MCF 10A (cell line): ENCODE measurements at regions of chr5 and their contacts with region 1.

Region 1: GRCh38 chr5:135551593-135552447 is 16.1 kb upstream of the NEUROG1 start:
- DNase-seq: peak; percentile 87
- H3K4me3 Mint-ChIP-seq: no peak overlapping the region
- H3K27ac Mint-ChIP-seq: no peak overlapping the region
- H3K4me1 Mint-ChIP-seq: peaks cover 5% of the 10 kb centered on the region
- H3K27me3 Mint-ChIP-seq: peaks cover 25% of the 10 kb centered on the region
- CTCF ChIP-seq: peak; percentile 97

Region 2: DNA sequence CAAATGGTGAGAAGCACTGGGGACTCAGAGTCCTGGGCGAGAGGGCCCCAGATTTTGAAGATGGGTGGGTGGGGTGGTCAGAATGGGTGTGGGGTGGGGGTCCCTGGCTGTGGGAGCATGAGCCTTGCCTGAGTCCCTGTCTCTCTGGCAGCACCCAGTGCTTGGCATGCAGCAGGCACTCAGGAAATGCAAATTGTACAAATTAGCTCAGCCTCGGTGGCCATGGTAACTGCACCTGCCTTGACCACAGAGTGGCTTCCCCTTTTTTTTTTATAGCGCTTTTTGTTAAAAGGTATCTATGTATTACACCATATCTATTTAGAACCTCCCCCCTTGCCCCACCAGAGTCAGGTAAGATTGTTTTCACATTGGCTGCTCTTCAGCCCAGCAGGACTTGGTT is 498.5 kb before region 1 on chr5:
- CTCF ChIA-PET with region 1: no interaction called
- POLR2A ChIA-PET with region 1: no interaction called
- intact Hi-C with region 1: no loop called
- DNase-seq: no peak
- H3K4me3 Mint-ChIP-seq: no peak overlapping the region
- H3K27ac Mint-ChIP-seq: no peak overlapping the region
- H3K4me1 Mint-ChIP-seq: no peaks in the 10 kb centered on the region
- H3K27me3 Mint-ChIP-seq: no peaks in the 10 kb centered on the region
- CTCF ChIP-seq: no peak

Region 3: GRCh38 chr5:135443161-135443960 is 108.5 kb before region 1 on chr5:
- CTCF ChIA-PET with region 1: interaction called, 30 read pairs
- POLR2A ChIA-PET with region 1: no interaction called
- intact Hi-C with region 1: no loop called
- DNase-seq: no peak
- H3K4me3 Mint-ChIP-seq: no peak overlapping the region
- H3K27ac Mint-ChIP-seq: no peak overlapping the region
- H3K4me1 Mint-ChIP-seq: peaks cover 8% of the 10 kb centered on the region
- H3K27me3 Mint-ChIP-seq: no peaks in the 10 kb centered on the region
- CTCF ChIP-seq: no peak

Region 4: GRCh38 chr5:135482381-135482933 is 69.4 kb before region 1 on chr5:
- CTCF ChIA-PET with region 1: interaction called, 2,166 read pairs
- POLR2A ChIA-PET with region 1: interaction called, 4 read pairs
- intact Hi-C with region 1: no loop called
- DNase-seq: no peak
- H3K4me3 Mint-ChIP-seq: no peak overlapping the region
- H3K27ac Mint-ChIP-seq: no peak overlapping the region
- H3K4me1 Mint-ChIP-seq: peaks cover 3% of the 10 kb centered on the region
- H3K27me3 Mint-ChIP-seq: no peaks in the 10 kb centered on the region
- CTCF ChIP-seq: no peak

Region 5: GRCh38 chr5:135508482-135509005 is 43.3 kb before region 1 on chr5:
- CTCF ChIA-PET with region 1: interaction called, 54 read pairs
- POLR2A ChIA-PET with region 1: interaction called, 4 read pairs
- intact Hi-C with region 1: no loop called
- DNase-seq: no peak
- H3K4me3 Mint-ChIP-seq: no peak overlapping the region
- H3K27ac Mint-ChIP-seq: no peak overlapping the region
- H3K4me1 Mint-ChIP-seq: peaks cover 9% of the 10 kb centered on the region
- H3K27me3 Mint-ChIP-seq: no peaks in the 10 kb centered on the region
- CTCF ChIP-seq: no peak

Region 6: DNA sequence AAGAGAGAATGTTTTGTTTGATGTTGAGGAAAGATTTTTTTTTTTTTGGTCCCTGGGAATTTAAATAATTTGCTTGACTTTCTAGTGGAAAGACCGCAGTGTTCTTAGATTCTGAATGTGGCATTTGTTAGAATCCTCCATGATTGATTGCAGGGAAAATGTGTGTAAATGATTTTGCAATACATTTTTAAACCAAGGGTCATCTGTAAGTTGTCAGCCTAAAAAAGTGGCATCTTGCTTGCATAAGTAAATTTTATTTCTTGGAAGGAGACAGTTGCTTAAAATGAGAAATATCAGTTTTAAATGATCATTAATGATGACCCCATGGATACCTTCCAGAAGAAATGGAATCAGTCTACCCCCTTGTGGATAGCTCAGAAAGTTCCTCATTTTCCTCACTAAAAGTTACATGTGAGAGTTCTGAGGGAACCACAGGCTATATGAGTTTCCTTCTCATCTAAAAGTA is 177.5 kb after region 1 on chr5:
- CTCF ChIA-PET with region 1: interaction called, 476 read pairs
- POLR2A ChIA-PET with region 1: no interaction called
- intact Hi-C with region 1: no loop called
- DNase-seq: peak; percentile 48
- H3K4me3 Mint-ChIP-seq: no peak overlapping the region
- H3K27ac Mint-ChIP-seq: no peak overlapping the region
- H3K4me1 Mint-ChIP-seq: no peaks in the 10 kb centered on the region
- H3K27me3 Mint-ChIP-seq: no peaks in the 10 kb centered on the region
- CTCF ChIP-seq: peak; percentile 53